Activated naive CD4-positive, alpha-beta T cell treated with anti-CD3 and anti-CD28 coated beads for 36 hours (primary cell): ENCODE measurements at regions of chr20 and their contacts with region 1.

Region 1: GRCh38 chr20:45998761-45999160 is 9.9 kb upstream of the MMP9 start:
- DNase-seq: peak; percentile 73
- H3K4me3 Mint-ChIP-seq: no peak overlapping the region
- H3K27ac Mint-ChIP-seq: no peak overlapping the region
- H3K4me1 Mint-ChIP-seq: peaks cover 67% of the 10 kb centered on the region
- H3K27me3 Mint-ChIP-seq: no peaks in the 10 kb centered on the region

Region 2: DNA sequence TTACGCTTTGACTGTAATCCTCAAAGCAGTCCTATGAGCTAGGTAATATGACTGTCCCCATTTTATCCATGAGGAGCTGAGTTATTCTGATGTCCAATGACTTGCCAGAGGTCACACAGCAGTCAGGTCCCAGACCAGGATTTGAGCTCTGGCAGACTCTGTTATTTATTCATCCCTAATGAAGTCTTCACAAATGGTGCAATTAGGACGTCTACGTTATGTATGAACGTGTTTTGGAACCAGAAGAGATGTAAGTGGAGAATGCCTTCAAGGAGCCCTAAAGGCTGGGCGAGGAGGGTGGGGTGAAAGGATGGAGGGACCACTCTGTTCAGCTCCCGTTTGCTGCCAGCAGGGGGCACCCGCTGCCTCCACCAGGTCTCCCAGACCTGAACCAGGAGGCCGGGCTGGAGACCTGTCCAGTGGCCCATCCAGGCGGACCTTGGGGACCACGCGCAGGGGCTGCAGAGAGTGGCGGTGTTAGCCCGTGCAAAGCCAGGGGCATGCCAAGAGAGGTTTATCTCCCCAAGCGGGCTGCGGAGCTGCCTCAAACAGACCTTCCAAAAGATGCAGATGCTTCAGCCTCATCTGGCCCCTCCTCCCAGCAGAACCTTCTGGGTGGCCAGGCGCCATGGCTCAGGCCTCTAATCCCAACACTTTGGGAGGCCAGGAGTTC is 11.5 kb before region 1 on chr20:
- CTCF ChIA-PET with region 1: interaction called, 37 read pairs
- intact Hi-C with region 1: no loop called
- DNase-seq: peak; percentile 85
- H3K4me3 Mint-ChIP-seq: no peak overlapping the region
- H3K27ac Mint-ChIP-seq: no peak overlapping the region
- H3K4me1 Mint-ChIP-seq: peaks cover 2% of the 10 kb centered on the region
- H3K27me3 Mint-ChIP-seq: no peaks in the 10 kb centered on the region

Region 3: GRCh38 chr20:46073443-46073842 is 74.7 kb after region 1 on chr20:
- CTCF ChIA-PET with region 1: no interaction called
- intact Hi-C with region 1: no loop called
- DNase-seq: no peak
- H3K4me3 Mint-ChIP-seq: no peak overlapping the region
- H3K27ac Mint-ChIP-seq: no peak overlapping the region
- H3K4me1 Mint-ChIP-seq: no peaks in the 10 kb centered on the region
- H3K27me3 Mint-ChIP-seq: no peaks in the 10 kb centered on the region

Region 4: GRCh38 chr20:46406199-46406985 is 407.6 kb after region 1 on chr20 and contains the start of gene ELMO2:
- CTCF ChIA-PET with region 1: no interaction called
- intact Hi-C with region 1: loop called (anchors 1 kb)
- DNase-seq: peak; percentile 98
- H3K4me3 Mint-ChIP-seq: peak within 1 kb of the TSS; percentile 88
- H3K27ac Mint-ChIP-seq: peak within 1 kb of the TSS; percentile 88
- H3K4me1 Mint-ChIP-seq: peaks cover 55% of the 10 kb centered on the region
- H3K27me3 Mint-ChIP-seq: no peaks in the 10 kb centered on the region
- total RNA-seq, gene ELMO2: 76.8 to 81.0 TPM